ENCODE measurements at regions of chr1 and their contacts with region 1.

Region 1: DNA sequence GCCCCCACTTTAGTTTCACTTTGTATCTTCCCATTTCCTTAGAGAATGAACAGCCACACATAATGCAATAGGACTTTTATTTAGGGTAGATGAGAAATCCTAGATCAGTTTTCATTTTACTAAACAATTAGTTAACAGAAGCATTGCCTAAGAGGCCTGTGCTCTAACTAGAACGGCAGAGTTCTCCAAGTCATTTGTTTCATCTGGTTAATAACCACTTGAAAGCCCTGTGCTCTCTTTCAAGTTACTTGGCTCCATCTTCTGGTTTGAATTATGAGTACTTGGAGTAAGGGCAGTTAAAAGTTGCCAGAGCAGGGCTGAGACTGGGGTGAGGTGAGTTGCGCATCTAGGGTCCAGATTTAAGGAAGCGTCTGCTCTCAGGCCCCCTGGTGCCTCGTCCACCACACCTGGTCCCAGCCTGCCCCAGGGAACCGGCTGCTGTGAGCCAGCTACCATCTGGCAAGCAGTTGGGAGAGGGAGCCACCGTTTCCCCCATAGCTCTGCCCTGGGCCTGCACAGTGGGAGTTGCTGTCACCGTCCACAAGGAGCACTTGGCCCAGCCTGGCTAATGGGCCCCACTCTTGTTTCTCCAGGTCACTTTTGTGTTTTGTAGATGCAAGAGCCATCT is 18.1 kb upstream of the SLC44A3 start:
- DNase-seq: peak; percentile 48 to 93
- H3K4me3 ChIP-seq: peak overlapping the region; percentile 22; the same call in 1 of the 2 replicates
- H3K27ac ChIP-seq: peak overlapping the region; percentile 79
- H3K4me1 ChIP-seq: peaks cover 24% of the 10 kb centered on the region
- H3K27me3 ChIP-seq: no peaks in the 10 kb centered on the region
- CTCF ChIP-seq: peak; percentile 85

Region 2: DNA sequence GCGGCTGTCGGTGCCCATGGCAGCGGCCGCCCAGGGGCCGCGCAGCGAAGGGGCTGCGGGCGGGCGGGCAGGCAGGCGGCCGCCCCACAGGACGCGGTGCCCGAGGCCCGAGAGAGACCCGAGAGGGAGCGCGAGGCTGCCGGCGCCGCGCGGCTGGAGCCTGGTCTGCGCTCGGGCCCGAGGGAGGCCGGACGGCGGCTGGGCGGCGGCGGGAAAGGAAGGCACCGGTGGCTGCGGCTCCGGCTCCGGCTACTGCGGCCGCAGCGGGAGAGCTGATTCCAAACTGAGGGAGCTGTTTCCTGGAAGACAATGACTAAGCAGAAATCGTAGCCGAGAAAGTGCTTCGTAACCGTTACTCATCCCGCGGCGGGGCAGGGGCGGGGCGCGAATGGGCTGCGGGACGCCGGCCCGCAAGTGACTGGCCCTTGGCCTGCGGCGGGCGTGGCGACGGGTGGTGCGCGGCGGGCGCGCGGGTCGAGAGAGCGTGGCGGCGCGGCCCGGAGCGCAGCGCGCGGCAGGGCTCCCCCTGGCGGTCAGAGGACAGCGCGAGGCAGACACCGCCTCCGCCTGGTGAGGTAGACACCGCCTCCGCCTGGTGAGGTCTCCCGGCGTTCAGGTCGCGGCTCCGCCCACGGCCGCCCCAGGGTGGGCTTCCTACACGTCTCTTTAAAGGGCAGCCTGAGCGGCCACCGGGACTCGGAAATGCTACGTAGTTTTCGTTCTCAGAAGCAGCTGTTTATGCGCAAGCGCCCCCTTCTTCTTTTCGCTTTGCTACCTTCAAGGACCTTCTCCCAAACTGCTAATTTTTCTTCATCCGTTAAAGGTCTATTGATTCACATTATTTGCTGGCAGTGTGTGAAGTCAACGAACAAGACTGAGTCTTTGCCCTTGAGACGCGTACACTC is 892.6 kb before region 1 on chr1 and contains the start of gene GCLM:
- CTCF ChIA-PET with region 1: no interaction called
- POLR2A ChIA-PET with region 1: no interaction called
- intact Hi-C with region 1: loop called (anchors 5 kb)
- DNase-seq: peak; percentile 94 to 97
- H3K4me3 ChIP-seq: peak within 1 kb of the TSS; percentile 68
- H3K27ac ChIP-seq: peak within 1 kb of the TSS; percentile 80
- H3K4me1 ChIP-seq: peaks cover 32% of the 10 kb centered on the region
- H3K27me3 ChIP-seq: no peaks in the 10 kb centered on the region
- CTCF ChIP-seq: peak; percentile 80
- total RNA-seq, gene GCLM: 270 and 272 TPM in 2 replicates

Region 3: GRCh38 chr1:94481473-94481933 is 320.5 kb before region 1 on chr1:
- CTCF ChIA-PET with region 1: no interaction called
- POLR2A ChIA-PET with region 1: no interaction called
- intact Hi-C with region 1: loop called (anchors 1 kb)
- DNase-seq: peak; percentile 56 to 81
- H3K4me3 ChIP-seq: no peak overlapping the region
- H3K27ac ChIP-seq: no peak overlapping the region
- H3K4me1 ChIP-seq: no peaks in the 10 kb centered on the region
- H3K27me3 ChIP-seq: no peaks in the 10 kb centered on the region
- CTCF ChIP-seq: peak; percentile 96

Region 4: GRCh38 chr1:94527447-94528031 is 274.5 kb before region 1 on chr1:
- CTCF ChIA-PET with region 1: no interaction called
- POLR2A ChIA-PET with region 1: interaction called, 8 read pairs
- intact Hi-C with region 1: loop called (anchors 1 kb)
- DNase-seq: peak; percentile 62 to 99
- H3K4me3 ChIP-seq: no peak overlapping the region
- H3K27ac ChIP-seq: peak overlapping the region; percentile 71
- H3K4me1 ChIP-seq: peaks cover 60% of the 10 kb centered on the region
- H3K27me3 ChIP-seq: no peaks in the 10 kb centered on the region
- CTCF ChIP-seq: 0 out of 2 replicates have a peak, but pooled peaks have one; percentile 40

Region 5: GRCh38 chr1:94641990-94642389 is 160.0 kb before region 1 on chr1:
- CTCF ChIA-PET with region 1: no interaction called
- POLR2A ChIA-PET with region 1: interaction called, 5 read pairs
- intact Hi-C with region 1: loop called (anchors 1 kb)
- DNase-seq: peak; percentile 78 to 100
- H3K4me3 ChIP-seq: peak overlapping the region; percentile 18; the same call in 1 of the 2 replicates
- H3K27ac ChIP-seq: peak overlapping the region; percentile 97
- H3K4me1 ChIP-seq: peaks cover 85% of the 10 kb centered on the region
- H3K27me3 ChIP-seq: no peaks in the 10 kb centered on the region
- CTCF ChIP-seq: no peak

Region 6: GRCh38 chr1:94727846-94728715 is 74.0 kb before region 1 on chr1:
- CTCF ChIA-PET with region 1: no interaction called
- POLR2A ChIA-PET with region 1: interaction called, 3 read pairs
- intact Hi-C with region 1: loop called (anchors 1 kb)
- DNase-seq: peak; percentile 83 to 100
- H3K4me3 ChIP-seq: peak overlapping the region; percentile 1; the same call in 1 of the 2 replicates
- H3K27ac ChIP-seq: peak overlapping the region; percentile 85
- H3K4me1 ChIP-seq: peaks cover 44% of the 10 kb centered on the region
- H3K27me3 ChIP-seq: no peaks in the 10 kb centered on the region
- CTCF ChIP-seq: no peak

Region 7: DNA sequence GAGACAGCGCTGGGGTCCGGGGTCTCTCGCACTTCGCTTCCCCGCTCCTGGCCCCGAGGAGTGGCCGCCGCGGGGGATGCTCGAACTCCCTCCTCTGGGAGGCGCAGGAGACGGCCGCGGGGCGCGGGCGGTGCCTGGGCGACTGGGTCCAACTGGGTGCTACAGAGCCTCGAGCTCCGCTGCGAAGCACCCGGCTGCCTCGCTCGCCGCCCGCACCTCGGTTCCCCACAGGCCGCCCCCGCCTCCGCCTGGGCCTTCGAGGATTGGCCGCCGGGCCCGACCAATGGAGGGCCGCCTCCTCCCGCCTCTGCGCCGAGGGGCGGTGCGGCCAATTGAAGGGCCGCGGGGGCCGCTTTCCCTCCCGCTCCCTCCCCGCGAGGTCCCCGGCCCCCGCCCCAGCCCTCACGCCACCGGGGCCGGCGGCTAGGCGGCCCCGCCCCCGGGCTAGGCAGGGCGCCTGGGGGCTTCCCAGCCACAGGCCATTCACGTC is 124.9 kb after region 1 on chr1 and contains the start of gene CNN3:
- CTCF ChIA-PET with region 1: no interaction called
- POLR2A ChIA-PET with region 1: no interaction called
- intact Hi-C with region 1: loop called (anchors 5 kb)
- DNase-seq: peak; percentile 80 to 95
- H3K4me3 ChIP-seq: peak within 1 kb of the TSS; percentile 67
- H3K27ac ChIP-seq: peak within 1 kb of the TSS; percentile 64
- H3K4me1 ChIP-seq: peaks cover 67% of the 10 kb centered on the region
- H3K27me3 ChIP-seq: no peaks in the 10 kb centered on the region
- CTCF ChIP-seq: no peak
- total RNA-seq, gene CNN3: 125 and 135 TPM in 2 replicates

Region 8: GRCh38 chr1:95426772-95427171 is 624.7 kb after region 1 on chr1:
- CTCF ChIA-PET with region 1: no interaction called
- POLR2A ChIA-PET with region 1: no interaction called
- intact Hi-C with region 1: no loop called
- DNase-seq: no peak
- H3K4me3 ChIP-seq: no peak overlapping the region
- H3K27ac ChIP-seq: no peak overlapping the region
- H3K4me1 ChIP-seq: no peaks in the 10 kb centered on the region
- H3K27me3 ChIP-seq: peaks cover 36% of the 10 kb centered on the region
- CTCF ChIP-seq: no peak

Measured in PC-9 (cell line).